ENCODE measurements at regions of chr2 and their contacts with region 1.

Region 1: DNA sequence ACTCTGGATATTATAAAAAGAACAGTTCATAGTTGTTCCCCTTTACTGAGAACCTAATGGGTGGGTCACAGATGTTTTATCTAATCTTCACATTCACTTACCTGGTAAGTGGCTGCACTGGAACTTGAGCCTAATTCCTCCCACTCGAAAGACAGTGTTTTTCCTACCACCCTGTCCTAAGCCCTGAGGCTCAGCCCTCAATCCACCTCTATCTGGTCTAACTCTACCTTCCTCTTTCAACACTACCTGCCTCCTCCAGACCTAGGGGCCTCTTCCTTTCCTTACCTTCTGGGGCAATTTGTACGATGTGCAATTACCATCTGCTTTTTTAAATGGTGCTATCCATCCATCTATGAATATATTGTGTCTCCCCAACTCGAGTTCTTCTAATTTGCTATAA is 9.7 kb upstream of the KIF3C start:
- DNase-seq: no peak
- H3K4me3 Mint-ChIP-seq: no peak overlapping the region
- H3K27ac Mint-ChIP-seq: no peak overlapping the region
- H3K4me1 Mint-ChIP-seq: peaks cover 22% of the 10 kb centered on the region
- H3K27me3 Mint-ChIP-seq: peaks cover 9% of the 10 kb centered on the region

Region 2: GRCh38 chr2:25951071-25951547 is 40.9 kb before region 1 on chr2:
- intact Hi-C with region 1: loop called (anchors 1 kb)
- DNase-seq: peak; percentile 50
- H3K4me3 Mint-ChIP-seq: no peak overlapping the region
- H3K27ac Mint-ChIP-seq: peak overlapping the region; percentile 37
- H3K4me1 Mint-ChIP-seq: peaks cover 5% of the 10 kb centered on the region
- H3K27me3 Mint-ChIP-seq: peaks cover 2% of the 10 kb centered on the region

Region 3: GRCh38 chr2:26033818-26034636 is 42.1 kb after region 1 on chr2 and contains the start of gene RAB10:
- intact Hi-C with region 1: loop called (anchors 2 kb)
- DNase-seq: peak; percentile 100
- H3K4me3 Mint-ChIP-seq: peak within 1 kb of the TSS; percentile 94
- H3K27ac Mint-ChIP-seq: peak within 1 kb of the TSS; percentile 93
- H3K4me1 Mint-ChIP-seq: peaks cover 26% of the 10 kb centered on the region
- H3K27me3 Mint-ChIP-seq: no peaks in the 10 kb centered on the region
- total RNA-seq, gene RAB10: 128 and 130 TPM in 2 replicates

Region 4: DNA sequence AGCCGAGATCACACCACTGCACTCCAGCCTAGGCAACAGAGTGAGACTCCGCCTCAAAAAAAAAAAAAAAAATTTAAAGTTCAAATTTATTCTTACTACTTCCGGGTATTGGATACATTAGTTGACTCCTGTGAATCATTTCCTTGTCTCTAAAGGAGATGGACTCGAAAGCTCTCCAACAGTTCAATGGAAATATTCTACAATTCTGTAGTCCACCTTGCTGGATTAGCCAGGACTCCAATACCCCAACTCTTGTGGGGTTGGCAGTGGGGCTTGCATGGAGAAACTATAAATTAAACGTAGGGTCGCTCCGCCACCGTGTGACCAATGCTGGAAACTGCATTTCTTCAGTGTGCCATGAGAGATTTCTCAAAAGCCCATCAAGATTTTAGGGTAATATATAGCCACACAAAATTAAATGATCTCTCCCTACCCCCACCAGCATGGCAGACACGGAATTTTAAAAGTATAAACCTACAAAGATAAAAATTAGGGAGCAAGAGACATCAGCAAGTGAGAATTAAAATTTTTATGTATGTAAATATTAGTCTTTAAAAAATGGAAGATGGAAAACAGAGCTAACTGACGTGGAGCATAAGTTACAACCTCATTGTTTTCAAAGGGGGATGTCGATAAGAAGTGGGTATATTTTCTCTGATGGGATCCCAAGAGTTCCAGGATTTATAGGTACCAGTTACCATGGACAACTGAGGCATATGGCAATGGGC is 153.2 kb after region 1 on chr2:
- intact Hi-C with region 1: loop called (anchors 1 kb)
- DNase-seq: peak; percentile 43
- H3K4me3 Mint-ChIP-seq: no peak overlapping the region
- H3K27ac Mint-ChIP-seq: no peak overlapping the region
- H3K4me1 Mint-ChIP-seq: no peaks in the 10 kb centered on the region
- H3K27me3 Mint-ChIP-seq: peaks cover 7% of the 10 kb centered on the region

Region 5: GRCh38 chr2:27322766-27323595 is 1331.0 kb after region 1 on chr2 and contains the start of gene MPV17:
- intact Hi-C with region 1: no loop called
- DNase-seq: peak; percentile 84
- H3K4me3 Mint-ChIP-seq: peak within 1 kb of the TSS; percentile 99
- H3K27ac Mint-ChIP-seq: peak within 1 kb of the TSS; percentile 88
- H3K4me1 Mint-ChIP-seq: peaks cover 32% of the 10 kb centered on the region
- H3K27me3 Mint-ChIP-seq: no peaks in the 10 kb centered on the region
- total RNA-seq, gene MPV17: 85.9 and 89.9 TPM in 2 replicates

Measured in activated T-helper 1 cell treated with anti-CD3 and anti-CD28 coated beads, Interleukin-12 subunit alpha, Interleukin-12 subunit beta, Interleukin-2, Interleukin-4 antibody, amounts not matched to agents 30 ng/mL and 10 ng/mL and 1 ng/mL, durations not matched to agents 14 hours and 24 hours and 36 hours (primary cell).